ENCODE measurements at regions of chr3 and their contacts with region 1.

Region 1: DNA sequence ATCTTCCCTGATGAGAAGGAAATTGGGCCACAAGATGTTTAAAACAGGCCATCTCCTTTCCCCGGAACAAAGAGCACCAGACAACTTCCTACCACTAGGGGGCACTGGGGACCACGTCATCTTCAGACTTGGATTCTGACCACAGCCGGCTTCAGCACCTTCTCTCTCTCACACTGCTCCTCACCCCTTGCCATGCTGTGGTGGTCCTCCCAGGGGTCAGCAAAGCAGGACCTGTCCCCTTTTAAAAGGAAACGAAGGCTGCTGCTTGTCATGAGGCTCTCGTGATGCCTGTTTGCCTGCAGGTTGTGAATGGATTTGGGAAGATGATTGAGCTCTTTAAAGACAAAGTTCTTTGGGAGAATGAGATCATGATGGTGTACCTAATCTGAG is 16.2 kb downstream of the RFT1 start:
- DNase-seq: peak; percentile 91
- H3K4me3 Mint-ChIP-seq: no peak overlapping the region
- H3K27ac Mint-ChIP-seq: no peak overlapping the region
- H3K4me1 Mint-ChIP-seq: peaks cover 16% of the 10 kb centered on the region
- H3K27me3 Mint-ChIP-seq: no peaks in the 10 kb centered on the region

Region 2: DNA sequence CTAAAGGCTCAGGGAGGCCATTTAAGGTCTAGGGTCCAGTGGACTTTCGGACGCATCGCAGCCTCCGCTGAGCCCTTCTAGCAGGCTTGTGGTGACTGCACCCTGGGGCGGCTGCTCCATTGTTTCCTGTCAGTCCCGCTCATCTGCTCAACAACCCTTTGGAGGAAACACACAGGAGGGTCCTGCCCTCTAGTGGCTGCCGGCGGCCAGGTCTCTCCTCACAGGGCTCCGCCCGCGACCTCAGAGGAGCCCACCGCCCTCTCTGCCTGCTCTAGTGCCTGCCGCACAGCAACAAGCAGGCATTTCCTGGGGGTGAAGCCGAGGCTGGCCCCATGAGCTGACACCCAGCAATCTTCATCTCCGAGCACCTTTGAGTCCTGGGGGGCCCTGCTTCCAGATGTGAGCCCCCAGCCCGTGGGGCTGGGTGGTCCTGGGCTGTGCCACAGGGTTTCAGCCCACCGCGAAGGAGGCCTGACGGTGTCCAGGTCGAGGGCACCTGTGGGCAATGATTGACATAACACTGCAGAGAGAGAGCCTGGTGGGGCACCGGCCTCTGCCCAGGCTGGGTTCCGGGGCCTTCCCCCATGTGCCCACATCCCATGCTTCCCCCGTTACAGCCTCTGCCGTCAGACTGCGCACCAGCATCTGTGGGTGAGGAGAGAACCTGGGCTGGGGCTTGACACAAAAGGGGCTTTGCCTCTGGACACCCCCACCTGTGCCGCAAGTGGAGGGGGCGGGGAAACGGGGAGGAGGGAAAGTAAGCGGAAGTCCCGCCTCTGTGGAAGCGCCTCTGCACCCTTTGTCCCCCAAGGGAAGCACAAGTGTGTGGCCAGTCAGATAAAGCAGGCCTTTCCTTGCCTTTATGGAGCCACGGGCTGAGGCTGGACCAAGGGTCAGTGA is 41.1 kb before region 1 on chr3:
- CTCF ChIA-PET with region 1: interaction called, 11 read pairs
- intact Hi-C with region 1: no loop called
- DNase-seq: peak; percentile 95
- H3K4me3 Mint-ChIP-seq: peak overlapping the region; percentile 81
- H3K27ac Mint-ChIP-seq: peak overlapping the region; percentile 84
- H3K4me1 Mint-ChIP-seq: peaks cover 17% of the 10 kb centered on the region
- H3K27me3 Mint-ChIP-seq: no peaks in the 10 kb centered on the region

Region 3: DNA sequence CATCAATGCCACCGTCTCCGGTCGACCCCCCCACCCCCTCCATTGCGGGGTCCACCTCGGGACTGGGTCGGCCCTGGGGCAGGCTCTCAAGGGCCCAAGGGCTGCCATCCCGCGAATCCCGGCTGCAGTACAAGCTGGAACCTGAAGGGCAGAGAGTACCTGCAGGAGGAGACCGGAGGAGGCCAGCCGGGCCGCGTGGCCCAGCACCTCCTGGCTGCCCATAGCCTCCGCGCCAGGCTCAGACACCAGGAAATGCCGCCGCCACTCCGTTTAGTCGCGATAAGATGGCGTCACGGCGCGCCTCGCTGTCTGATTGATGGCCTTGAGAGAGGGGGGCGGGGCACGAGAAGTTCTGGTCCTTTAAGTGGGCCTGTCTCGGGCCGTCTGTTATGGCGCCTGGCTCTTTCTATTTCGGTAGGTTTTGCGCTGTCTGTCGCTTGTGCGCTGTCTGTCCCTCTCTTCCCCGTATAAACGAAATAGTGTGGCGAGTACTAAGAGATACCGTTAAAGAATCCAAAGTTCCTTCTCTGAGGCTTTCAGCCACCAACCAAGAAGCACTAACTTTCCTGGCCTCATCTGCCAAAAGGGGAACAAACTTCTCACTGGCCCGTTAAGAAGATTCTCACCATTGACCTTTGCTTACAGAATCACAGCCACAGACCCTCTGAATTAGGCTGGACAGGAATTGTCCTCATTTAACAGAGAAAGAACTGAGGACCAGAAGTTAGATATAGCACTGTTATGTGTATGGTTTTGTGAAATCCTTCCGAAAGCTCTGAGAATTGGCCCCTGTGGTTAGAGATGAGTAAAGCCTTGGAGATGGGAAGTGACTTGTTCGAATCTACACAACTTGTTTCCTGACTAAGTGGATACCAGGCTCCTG is 16.4 kb after region 1 on chr3 and contains the start of gene RFT1:
- CTCF ChIA-PET with region 1: interaction called, 32 read pairs
- intact Hi-C with region 1: loop called (anchors 1 kb)
- DNase-seq: peak; percentile 99
- H3K4me3 Mint-ChIP-seq: peak within 1 kb of the TSS; percentile 87
- H3K27ac Mint-ChIP-seq: peak within 1 kb of the TSS; percentile 93
- H3K4me1 Mint-ChIP-seq: peaks cover 27% of the 10 kb centered on the region
- H3K27me3 Mint-ChIP-seq: no peaks in the 10 kb centered on the region
- total RNA-seq, gene RFT1: 29.9 to 31.7 TPM

Region 4: GRCh38 chr3:53195602-53196574 is 81.9 kb after region 1 on chr3:
- CTCF ChIA-PET with region 1: interaction called, 88 read pairs
- intact Hi-C with region 1: loop called (anchors 1 kb)
- DNase-seq: peak; percentile 59
- H3K4me3 Mint-ChIP-seq: no peak overlapping the region
- H3K27ac Mint-ChIP-seq: no peak overlapping the region
- H3K4me1 Mint-ChIP-seq: peaks cover 3% of the 10 kb centered on the region
- H3K27me3 Mint-ChIP-seq: no peaks in the 10 kb centered on the region

Region 5: DNA sequence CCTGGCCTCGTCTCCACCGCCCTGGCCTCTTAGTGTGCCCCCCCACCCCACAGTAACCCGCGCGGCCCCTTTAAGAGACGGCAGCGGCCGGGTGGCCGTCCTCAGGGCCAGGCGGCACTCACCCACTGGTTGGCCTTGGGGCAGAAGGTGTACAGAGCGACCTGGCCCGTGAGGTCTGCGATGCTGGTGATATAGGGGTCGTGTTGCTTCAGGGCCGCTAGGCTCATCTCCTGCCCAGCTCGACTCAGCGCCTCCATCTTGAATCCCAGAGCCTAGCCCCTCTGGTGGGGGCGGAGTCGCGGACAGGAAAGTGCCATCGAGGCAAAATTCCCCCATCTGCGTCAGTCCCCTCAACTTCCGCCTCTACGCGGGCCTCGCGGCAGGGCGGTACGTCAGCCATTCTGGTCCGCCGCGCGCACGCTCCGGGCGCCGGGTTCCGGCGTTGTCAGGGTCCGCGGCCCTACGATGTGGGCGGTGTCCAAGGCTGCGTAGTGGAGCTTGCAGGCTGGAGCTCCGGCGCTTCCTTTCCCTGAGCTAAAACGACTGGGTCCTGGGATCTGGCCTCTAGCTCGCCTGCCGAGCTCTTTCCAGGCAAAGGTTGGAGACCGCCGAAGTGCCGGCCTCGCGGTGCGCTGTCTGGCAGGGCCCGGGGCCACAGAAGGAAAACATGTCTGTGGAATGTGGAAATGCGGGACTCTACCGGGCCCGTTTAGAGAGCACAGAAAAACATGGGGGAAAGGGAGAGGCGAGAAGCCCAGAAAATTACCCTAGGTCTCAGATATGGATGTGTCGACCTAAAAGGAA is 233.5 kb after region 1 on chr3 and contains the start of gene DCP1A:
- CTCF ChIA-PET with region 1: interaction called, 3 read pairs
- intact Hi-C with region 1: loop called (anchors 5 kb)
- DNase-seq: peak; percentile 97
- H3K4me3 Mint-ChIP-seq: peak within 1 kb of the TSS; percentile 96
- H3K27ac Mint-ChIP-seq: peak within 1 kb of the TSS; percentile 88
- H3K4me1 Mint-ChIP-seq: peaks cover 25% of the 10 kb centered on the region
- H3K27me3 Mint-ChIP-seq: no peaks in the 10 kb centered on the region
- total RNA-seq, gene DCP1A: 23.8 to 25.0 TPM

Region 6: GRCh38 chr3:53709860-53710674 is 596.1 kb after region 1 on chr3:
- CTCF ChIA-PET with region 1: no interaction called
- intact Hi-C with region 1: loop called (anchors 5 kb)
- DNase-seq: peak; percentile 79
- H3K4me3 Mint-ChIP-seq: no peak overlapping the region
- H3K27ac Mint-ChIP-seq: no peak overlapping the region
- H3K4me1 Mint-ChIP-seq: no peaks in the 10 kb centered on the region
- H3K27me3 Mint-ChIP-seq: peaks cover 3% of the 10 kb centered on the region